Activated B cell treated with CpG ODN at 0.5 μM for 24 hours (primary cell): ENCODE measurements at regions of chr13 and their contacts with region 1.

Region 1: GRCh38 chr13:26707122-26708006 is 53.2 kb downstream of the GPR12 start:
- DNase-seq: no peak
- ATAC-seq: no peak
- H3K4me3 Mint-ChIP-seq: no peak overlapping the region
- H3K27ac Mint-ChIP-seq: no peak overlapping the region
- H3K4me1 Mint-ChIP-seq: no peaks in the 10 kb centered on the region
- H3K27me3 Mint-ChIP-seq: peaks cover 10% of the 10 kb centered on the region
- CTCF ChIP-seq: no peak

Region 2: DNA sequence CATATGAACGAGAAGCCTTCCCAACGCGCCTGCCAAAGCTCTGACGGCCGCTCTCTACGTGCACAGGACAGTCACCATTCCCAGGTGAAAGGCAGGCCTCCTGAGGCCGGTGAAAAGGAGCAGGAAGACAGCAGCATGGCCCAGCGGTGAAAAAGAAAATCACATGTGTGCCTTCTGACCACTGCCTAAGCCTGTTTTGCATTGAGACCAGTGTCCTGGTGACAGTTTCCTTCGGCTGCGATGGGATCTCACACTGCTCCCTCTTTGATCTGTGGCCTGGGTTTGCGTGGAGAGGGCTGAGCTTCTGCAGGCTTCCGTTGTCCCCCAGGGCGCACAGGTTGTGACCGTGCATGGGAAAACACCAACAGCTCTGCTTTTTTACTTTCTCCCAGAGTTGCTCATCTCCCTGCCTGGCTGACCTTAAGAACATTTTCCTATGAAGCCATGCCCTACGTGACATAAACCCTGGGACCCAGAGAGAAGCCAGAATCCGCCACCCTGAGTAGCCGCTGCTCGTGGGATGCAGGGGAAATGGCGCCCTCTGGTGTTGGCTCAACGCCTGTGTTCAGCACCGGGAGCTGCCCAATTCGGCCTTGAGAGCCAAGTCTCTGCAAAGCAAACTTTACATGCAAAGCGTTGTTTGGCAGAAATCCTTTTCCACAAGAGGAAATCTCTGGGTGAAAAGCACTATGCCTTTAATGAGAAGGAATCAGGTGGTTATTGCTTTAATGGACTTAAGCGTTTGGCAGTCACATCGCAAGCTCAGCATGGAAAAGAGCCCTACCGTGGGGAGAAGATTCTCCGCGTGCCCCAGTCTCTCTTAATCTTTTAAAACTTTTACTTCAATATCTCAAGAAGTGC is 165.4 kb after region 1 on chr13:
- CTCF ChIA-PET with region 1: interaction called, 4 read pairs
- POLR2A ChIA-PET with region 1: no interaction called
- intact Hi-C with region 1: loop called (anchors 1 kb)
- DNase-seq: peak; percentile 20
- ATAC-seq: no peak
- H3K4me3 Mint-ChIP-seq: no peak overlapping the region
- H3K27ac Mint-ChIP-seq: no peak overlapping the region
- H3K4me1 Mint-ChIP-seq: no peaks in the 10 kb centered on the region
- H3K27me3 Mint-ChIP-seq: no peaks in the 10 kb centered on the region
- CTCF ChIP-seq: peak; percentile 27

Region 3: DNA sequence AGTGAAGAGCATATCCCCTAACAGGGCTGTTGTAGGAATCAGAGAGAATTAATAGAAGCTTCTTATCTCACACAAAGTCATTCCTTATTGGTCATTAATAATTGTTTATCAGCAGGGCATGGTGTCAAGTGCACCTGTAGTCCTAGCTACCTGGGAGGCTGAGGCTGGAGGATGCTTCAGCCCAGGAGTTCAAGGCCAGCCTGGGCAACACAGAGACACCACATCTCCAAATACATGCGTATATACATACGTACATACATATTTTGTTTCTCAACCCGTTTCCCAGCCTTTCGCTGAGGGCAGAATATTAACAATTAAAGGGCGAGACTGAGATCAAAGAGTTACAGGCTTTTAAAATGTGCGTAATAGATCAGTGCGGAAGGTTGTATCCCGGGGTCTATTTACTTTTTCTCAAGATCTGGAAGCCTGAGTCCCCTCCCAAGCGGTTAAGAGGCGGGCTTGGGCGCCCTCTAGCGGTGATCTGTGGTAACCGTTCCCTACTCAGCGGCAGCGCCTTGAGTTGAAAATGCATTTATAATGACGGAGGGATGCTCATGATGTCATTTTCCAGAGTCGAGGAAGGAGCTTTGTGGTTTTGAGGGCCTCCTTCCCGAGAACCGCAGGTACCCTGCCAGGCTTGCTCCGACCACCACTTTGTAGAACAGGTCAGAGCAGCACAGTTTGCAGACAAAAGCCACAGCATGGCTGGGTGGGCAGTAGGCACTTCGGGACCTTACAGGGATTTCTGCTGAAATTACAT is 222.8 kb after region 1 on chr13:
- CTCF ChIA-PET with region 1: interaction called, 6 read pairs
- POLR2A ChIA-PET with region 1: no interaction called
- intact Hi-C with region 1: loop called (anchors 1 kb)
- DNase-seq: peak; percentile 60
- ATAC-seq: peak; percentile 64
- H3K4me3 Mint-ChIP-seq: no peak overlapping the region
- H3K27ac Mint-ChIP-seq: no peak overlapping the region
- H3K4me1 Mint-ChIP-seq: no peaks in the 10 kb centered on the region
- H3K27me3 Mint-ChIP-seq: peaks cover 8% of the 10 kb centered on the region
- CTCF ChIP-seq: peak; percentile 95